ENCODE measurements at regions of chr4 and their contacts with region 1.

Region 1: GRCh38 chr4:147822128-147822527 is 90.2 kb downstream of the ARHGAP10 start:
- DNase-seq: peak; percentile 84 to 94 (median 85)
- ATAC-seq: peak; percentile 81 to 85
- H3K4me3 ChIP-seq: no peak overlapping the region
- H3K27ac ChIP-seq: peak overlapping the region; percentile 88
- H3K4me1 ChIP-seq: peaks cover 15% of the 10 kb centered on the region
- H3K27me3 ChIP-seq: no peaks in the 10 kb centered on the region

Region 2: DNA sequence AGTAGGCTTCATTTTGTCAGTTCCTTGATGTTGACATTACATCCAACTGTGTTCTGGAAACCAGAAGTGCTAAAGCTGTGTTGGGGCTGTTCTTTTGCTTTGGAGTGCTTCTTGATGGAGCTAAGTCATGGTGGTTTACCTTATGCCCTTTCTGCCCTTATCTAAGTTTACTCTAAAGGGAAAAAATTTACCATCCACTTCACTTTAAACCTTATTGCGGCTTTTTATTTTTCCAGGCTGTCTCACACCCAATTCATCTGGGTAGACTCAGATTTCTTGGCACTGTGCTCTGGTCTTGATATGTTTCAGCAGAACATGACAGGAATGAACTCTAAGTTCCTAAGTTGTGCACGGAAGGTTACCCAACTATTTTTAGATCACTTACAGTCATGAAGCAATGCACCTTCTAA is 771.8 kb before region 1 on chr4:
- intact Hi-C with region 1: no loop called
- DNase-seq: no peak
- ATAC-seq: no peak
- H3K4me3 ChIP-seq: no peak overlapping the region
- H3K27ac ChIP-seq: no peak overlapping the region
- H3K4me1 ChIP-seq: no peaks in the 10 kb centered on the region
- H3K27me3 ChIP-seq: no peaks in the 10 kb centered on the region

Region 3: GRCh38 chr4:147689067-147689466 is 133.1 kb before region 1 on chr4:
- intact Hi-C with region 1: no loop called
- DNase-seq: no peak
- ATAC-seq: no peak
- H3K4me3 ChIP-seq: no peak overlapping the region
- H3K27ac ChIP-seq: no peak overlapping the region
- H3K4me1 ChIP-seq: no peaks in the 10 kb centered on the region
- H3K27me3 ChIP-seq: no peaks in the 10 kb centered on the region

Region 4: DNA sequence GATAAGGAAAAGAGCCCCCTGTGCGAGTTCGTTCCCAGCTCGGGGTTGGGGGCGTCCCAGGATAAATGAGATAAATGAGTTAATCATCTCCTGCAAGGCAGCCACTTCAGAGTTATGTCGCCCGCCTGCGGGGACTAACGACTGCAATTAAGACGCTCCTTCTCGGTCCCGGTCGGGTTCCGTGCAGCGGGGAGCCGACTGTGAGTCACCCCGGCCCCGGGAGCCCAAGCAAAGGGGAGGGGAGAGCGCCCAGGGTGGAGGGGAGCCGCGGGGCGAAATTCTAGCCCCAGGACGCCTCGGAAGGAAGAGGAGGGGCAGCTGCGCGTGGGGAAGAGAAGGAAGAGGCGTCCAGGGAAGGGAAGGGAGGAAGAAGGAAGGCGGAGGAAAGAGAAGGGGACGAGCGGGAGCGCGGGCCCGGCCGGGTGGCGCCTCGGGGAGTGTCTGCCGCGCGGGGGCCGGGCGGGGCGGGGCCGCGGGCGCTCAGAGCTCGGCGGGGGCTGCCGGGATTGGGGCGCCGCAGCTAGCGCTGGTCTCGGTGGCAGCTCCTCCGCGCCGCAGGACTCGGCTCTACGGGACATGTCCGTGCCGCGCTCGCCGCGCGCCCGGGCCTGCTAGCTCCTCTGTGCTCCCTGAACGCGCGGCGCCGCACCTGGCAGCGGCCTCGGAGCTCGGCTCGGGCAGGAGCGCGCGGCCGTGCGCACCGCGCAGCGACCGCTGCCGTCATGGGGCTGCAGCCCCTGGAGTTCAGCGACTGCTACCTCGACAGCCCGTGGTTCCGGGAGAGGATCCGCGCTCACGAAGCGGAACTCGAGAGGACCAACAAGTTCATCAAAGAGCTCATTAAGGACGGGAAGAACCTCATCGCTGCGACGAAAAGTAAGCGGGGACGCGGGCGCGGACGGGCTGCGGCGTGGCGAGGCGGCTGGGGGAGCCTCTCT is 90.3 kb before region 1 on chr4 and contains the start of gene ARHGAP10:
- intact Hi-C with region 1: loop called in 1 of 4 experiments (anchors 10 kb)
- DNase-seq: peak; percentile 79 to 93 (median 92)
- ATAC-seq: peak; percentile 88 to 90
- H3K4me3 ChIP-seq: peak within 1 kb of the TSS; percentile 60
- H3K27ac ChIP-seq: peak within 1 kb of the TSS; percentile 64
- H3K4me1 ChIP-seq: peaks cover 5% of the 10 kb centered on the region
- H3K27me3 ChIP-seq: no peaks in the 10 kb centered on the region
- total RNA-seq, gene ARHGAP10: 43.3 to 54.1 (median 48.7) TPM